ENCODE measurements at regions of chr21 and their contacts with region 1.

Region 1: GRCh38 chr21:28522014-28522799 is 470.5 kb downstream of the LTN1 start:
- DNase-seq: no peak
- H3K4me3 ChIP-seq: no peak overlapping the region
- H3K27ac ChIP-seq: peak overlapping the region in 6 of 8 donors; percentile 37 to 63 (median 54)
- H3K4me1 ChIP-seq: peaks cover 0 to 23% (median 11%) of the 10 kb centered on the region in 6 donors
- H3K27me3 ChIP-seq: no peaks in the 10 kb centered on the region
- CTCF ChIP-seq: peak in 8 of 11 experiments; percentile 7 to 42 (median 26)
- POLR2A ChIP-seq: no peak

Region 2: GRCh38 chr21:28345934-28346333 is 176.3 kb before region 1 on chr21:
- intact Hi-C with region 1: loop called (anchors 5 kb)
- DNase-seq: no peak
- H3K4me3 ChIP-seq: no peak overlapping the region
- H3K27ac ChIP-seq: no peak overlapping the region
- H3K4me1 ChIP-seq: no peaks in the 10 kb centered on the region
- H3K27me3 ChIP-seq: no peaks in the 10 kb centered on the region
- CTCF ChIP-seq: no peak
- POLR2A ChIP-seq: no peak

Region 3: GRCh38 chr21:28737674-28738419 is 215.6 kb after region 1 on chr21:
- intact Hi-C with region 1: loop called (anchors 5 kb)
- DNase-seq: no peak
- H3K4me3 ChIP-seq: no peak overlapping the region
- H3K27ac ChIP-seq: no peak overlapping the region
- H3K4me1 ChIP-seq: peaks cover 0 to 10% (median 5%) of the 10 kb centered on the region in 6 donors
- H3K27me3 ChIP-seq: no peaks in the 10 kb centered on the region
- CTCF ChIP-seq: no peak
- POLR2A ChIP-seq: no peak